A549 (cell line): ENCODE measurements at regions of chr4 and their contacts with region 1.

Region 1: GRCh38 chr4:87006676-87007527 is 72.1 kb downstream of the AFF1 start:
- DNase-seq: peak; percentile 53 to 90
- ATAC-seq: peak; percentile 92 to 94
- H3K4me3 ChIP-seq: peak overlapping the region; percentile 81
- H3K27ac ChIP-seq: peak overlapping the region; percentile 94 to 97
- H3K4me1 ChIP-seq: peaks cover 46% of the 10 kb centered on the region
- CTCF ChIP-seq: peak; percentile 5; the same call in 1 of the 3 replicates
- EP300 ChIP-seq: no peak
- POLR2A ChIP-seq: peak; percentile 98
- RAD21 ChIP-seq: peak; percentile 1 to 21; a peak in 2 of 5 replicates

Region 2: GRCh38 chr4:86058621-86059020 is 948.3 kb before region 1 on chr4:
- CTCF ChIA-PET with region 1: no interaction called
- POLR2A ChIA-PET with region 1: no interaction called
- DNase-seq: no peak
- ATAC-seq: no peak
- H3K4me3 ChIP-seq: no peak overlapping the region
- H3K27ac ChIP-seq: no peak overlapping the region
- H3K4me1 ChIP-seq: peaks cover 21% of the 10 kb centered on the region; the same call in 2 of the 3 replicates
- CTCF ChIP-seq: no peak
- EP300 ChIP-seq: no peak
- POLR2A ChIP-seq: no peak
- RAD21 ChIP-seq: no peak

Region 3: GRCh38 chr4:86934771-86935565 is 71.9 kb before region 1 on chr4 and contains the start of gene AFF1:
- CTCF ChIA-PET with region 1: interaction called, 14 read pairs
- POLR2A ChIA-PET with region 1: interaction called, 62 read pairs
- DNase-seq: peak; percentile 75 to 93
- ATAC-seq: peak; percentile 77 to 83
- H3K4me3 ChIP-seq: peak within 1 kb of the TSS; percentile 78
- H3K27ac ChIP-seq: peak within 1 kb of the TSS; percentile 89 to 98
- H3K4me1 ChIP-seq: peaks cover 40% of the 10 kb centered on the region
- CTCF ChIP-seq: peak; percentile 18; the same call in 1 of the 3 replicates
- EP300 ChIP-seq: no peak
- POLR2A ChIP-seq: peak; percentile 78
- RAD21 ChIP-seq: peak in 1 of 2 experiments; percentile 30; a peak in 1 of 5 replicates
- polyA plus RNA-seq, gene AFF1: 15.4 and 29.8 TPM in 2 replicates